ENCODE measurements at regions of chr11 and their contacts with region 1.

Region 1: GRCh38 chr11:6635082-6635932 is 16.1 kb upstream of the TPP1 start:
- DNase-seq: peak; percentile 88
- ATAC-seq: peak; percentile 82

Region 2: DNA sequence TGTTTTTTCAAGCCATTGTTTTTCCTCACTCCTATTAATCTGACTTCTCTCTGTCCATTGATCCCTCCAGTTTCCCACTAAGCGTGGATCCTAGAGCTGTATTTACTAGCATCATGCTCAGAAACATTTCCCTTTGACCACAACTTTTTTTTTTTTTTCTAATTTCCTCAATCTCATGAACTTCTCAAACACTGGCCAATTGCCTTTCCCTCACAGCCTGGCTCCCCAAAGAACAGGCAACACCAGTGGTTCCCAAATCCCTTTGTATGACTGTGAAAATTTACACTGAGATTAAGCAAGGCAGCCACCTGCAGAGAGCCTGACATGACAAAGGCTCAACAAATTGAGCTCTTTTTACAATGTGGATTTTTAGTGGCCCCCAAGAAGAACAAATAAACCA is 14.7 kb before region 1 on chr11:
- intact Hi-C with region 1: loop called (anchors 1 kb)
- DNase-seq: no peak
- ATAC-seq: no peak

Region 3: DNA sequence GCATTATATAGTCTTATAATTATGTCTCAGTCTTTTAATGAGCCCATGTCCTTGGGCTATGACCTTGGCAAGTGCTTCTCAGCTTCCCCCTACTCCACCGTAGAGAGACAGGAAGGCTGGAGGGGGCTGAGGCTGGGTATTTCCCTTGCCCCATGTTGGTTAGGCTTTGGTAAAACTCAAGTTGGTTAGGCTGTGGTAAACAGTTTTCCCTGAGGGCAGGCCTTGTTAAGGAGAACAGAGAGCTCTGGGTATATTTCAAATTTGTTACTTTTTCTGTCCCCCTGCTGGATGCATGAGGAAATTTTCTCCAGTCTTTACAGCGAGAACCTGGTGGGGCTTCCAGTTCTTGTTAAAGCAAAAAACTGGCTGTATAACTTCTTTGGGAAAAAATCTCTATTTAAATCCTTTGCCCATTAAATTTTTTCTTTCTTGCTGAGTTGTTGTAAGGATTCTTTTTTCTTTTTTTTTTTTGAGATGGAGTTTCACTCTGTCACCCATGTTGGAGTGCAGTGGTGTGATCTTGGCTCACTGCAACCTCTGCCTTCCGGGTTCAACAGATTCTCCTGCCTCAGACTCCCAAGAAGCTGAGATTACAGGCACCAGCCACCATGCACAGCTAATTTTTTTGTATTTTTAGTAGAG is 32.5 kb after region 1 on chr11:
- intact Hi-C with region 1: no loop called
- DNase-seq: no peak
- ATAC-seq: peak; percentile 60

Measured in Right ventricle myocardium inferior (tissue), 1 donor.